Right ventricle myocardium inferior (tissue), 1 donor: ENCODE measurements at regions of chr12 and their contacts with region 1.

Region 1: DNA sequence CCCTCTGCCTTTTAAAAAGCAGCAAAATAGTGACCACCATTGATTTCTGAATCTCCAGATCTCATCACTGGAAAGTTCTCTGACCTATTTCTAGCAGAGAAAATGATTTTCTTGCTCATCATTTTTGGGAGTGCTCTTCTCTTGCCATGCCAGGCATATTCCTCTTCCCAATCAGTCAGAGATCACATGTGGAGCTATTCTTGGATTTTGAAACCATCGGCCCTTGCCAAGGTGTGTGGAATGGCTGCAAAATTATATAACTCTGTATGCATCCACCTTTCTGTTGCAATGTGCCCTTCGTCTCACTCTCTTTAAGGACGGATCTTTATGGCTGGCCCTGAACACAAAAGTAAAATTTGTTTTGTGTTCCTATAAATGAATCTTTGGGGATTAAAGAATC is 25.5 kb upstream of the LDHB start:
- DNase-seq: no peak
- ATAC-seq: peak; percentile 62

Region 2: GRCh38 chr12:21527451-21528180 is 155.5 kb before region 1 on chr12:
- intact Hi-C with region 1: loop called (anchors 10 kb)
- DNase-seq: peak; percentile 74
- ATAC-seq: peak; percentile 94

Region 3: GRCh38 chr12:21823581-21823980 is 140.5 kb after region 1 on chr12:
- intact Hi-C with region 1: no loop called
- DNase-seq: peak; percentile 80
- ATAC-seq: peak; percentile 70